Dorsolateral prefrontal cortex (tissue), 120 donors: ENCODE measurements at regions of chr15 and their contacts with region 1.

Region 1: GRCh38 chr15:38991126-38991525 is 426.5 kb upstream of the RASGRP1 start:
- DNase-seq: no peak
- H3K4me3 ChIP-seq: no peak overlapping the region
- H3K27ac ChIP-seq: no peak overlapping the region
- H3K27me3 ChIP-seq: no peaks in the 10 kb centered on the region
- CTCF ChIP-seq: peak in 54 of 56 donors; percentile 7 to 67 (median 46)

Region 2: GRCh38 chr15:38817427-38818156 is 173.5 kb before region 1 on chr15:
- intact Hi-C with region 1: loop called (anchors 5 to 10 kb)
- DNase-seq: peak; percentile 70 to 85 (median 79)
- H3K4me3 ChIP-seq: peak overlapping the region in 17 of 59 donors; percentile 4 to 45 (median 17)
- H3K27ac ChIP-seq: no peak overlapping the region
- H3K27me3 ChIP-seq: peaks cover 0 to 6% (median 0%) of the 10 kb centered on the region in 45 donors
- CTCF ChIP-seq: peak; percentile 78 to 100 (median 96)

Region 3: GRCh38 chr15:39188925-39189324 is 197.8 kb after region 1 on chr15:
- intact Hi-C with region 1: no loop called
- DNase-seq: no peak
- H3K4me3 ChIP-seq: no peak overlapping the region
- H3K27ac ChIP-seq: no peak overlapping the region
- H3K27me3 ChIP-seq: peaks cover 0 to 4% (median 0%) of the 10 kb centered on the region in 45 donors
- CTCF ChIP-seq: no peak